GM10248 (cell line): ENCODE measurements at regions of chr1 and their contacts with region 1.

Region 1: GRCh38 chr1:91830242-91831131 is 55.5 kb downstream of the TGFBR3 start:
- DNase-seq: no peak
- CTCF ChIP-seq: no peak

Region 2: DNA sequence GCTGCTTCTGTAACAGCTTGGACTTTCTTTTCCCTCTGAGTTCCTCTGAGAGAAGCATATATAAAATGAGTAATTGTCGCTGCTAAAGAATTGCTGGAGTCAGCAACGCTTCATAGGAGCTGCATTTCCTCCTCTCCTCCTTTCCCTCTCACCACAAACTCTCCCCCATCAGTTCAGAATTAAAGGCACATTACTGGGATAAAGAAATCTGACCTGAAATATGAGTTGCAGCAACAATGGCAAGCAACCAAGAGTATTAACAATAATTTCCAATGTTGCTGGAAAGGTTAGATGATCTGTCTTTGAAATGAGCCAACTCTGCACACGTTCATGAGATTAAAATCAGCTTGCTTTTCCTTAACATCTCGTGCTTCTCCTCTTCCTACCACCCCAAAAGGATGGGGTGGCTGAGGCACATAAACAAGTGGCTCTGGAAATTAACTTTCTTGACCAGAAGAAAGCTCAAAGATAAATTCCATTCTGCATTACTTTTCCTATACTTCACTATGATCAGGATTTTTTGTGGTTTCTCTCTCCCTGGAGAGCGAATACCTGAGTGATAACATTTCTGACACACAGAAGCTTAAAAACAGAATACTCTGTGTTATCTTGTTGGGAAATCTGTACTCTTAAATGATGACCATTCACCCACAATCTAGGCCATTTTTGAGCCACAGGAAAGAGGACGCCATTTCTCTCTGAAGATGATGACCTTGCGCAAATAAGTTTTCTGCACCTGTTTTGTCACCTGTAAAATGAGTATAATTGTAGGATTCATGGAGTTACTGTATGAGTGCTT is 34.7 kb before region 1 on chr1:
- CTCF ChIA-PET with region 1: no interaction called
- POLR2A ChIA-PET with region 1: no interaction called
- DNase-seq: no peak
- CTCF ChIP-seq: no peak

Region 3: GRCh38 chr1:91809317-91809716 is 21.2 kb before region 1 on chr1:
- CTCF ChIA-PET with region 1: interaction called, 10 read pairs
- POLR2A ChIA-PET with region 1: interaction called, 3 read pairs
- DNase-seq: no peak
- CTCF ChIP-seq: no peak